ENCODE measurements at regions of chr14 and their contacts with region 1.

Region 1: DNA sequence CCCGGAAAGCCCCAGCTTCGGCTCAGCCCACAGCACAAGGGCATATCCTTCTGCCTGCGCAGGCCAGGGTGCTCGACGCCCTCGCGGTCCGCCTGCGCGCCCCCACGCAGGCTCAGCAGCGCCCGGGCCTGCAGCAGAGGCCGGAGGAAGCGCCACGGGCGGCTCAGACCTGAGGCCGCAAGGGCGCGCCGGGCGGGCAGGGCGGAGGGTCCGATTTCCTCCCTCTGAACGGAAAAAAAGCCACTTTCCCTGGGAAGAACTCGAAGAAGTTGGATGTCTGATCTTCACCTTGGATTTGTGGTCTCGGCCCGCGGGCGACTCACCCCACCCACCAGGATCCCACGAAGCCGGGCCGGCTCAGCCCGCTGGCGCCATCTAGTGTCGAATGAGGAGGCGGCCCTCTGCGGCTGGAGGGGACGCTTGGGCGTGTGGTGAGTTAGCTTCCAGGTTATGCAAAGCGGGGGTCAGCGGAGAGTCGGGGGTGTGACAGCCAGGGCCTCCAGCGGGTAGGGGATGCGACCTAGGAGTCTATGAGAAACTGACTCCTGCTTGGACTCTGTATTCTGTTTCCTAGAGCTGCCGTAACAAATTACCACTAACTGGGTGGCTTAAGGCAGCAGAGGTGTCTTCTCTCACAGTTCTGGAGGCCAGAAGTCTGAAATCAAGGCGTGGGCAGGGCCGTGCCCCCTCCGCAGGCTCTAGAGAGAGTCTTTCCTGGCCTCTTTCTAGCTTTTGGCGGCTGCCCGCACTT is 40.0 kb upstream of the SRSF5 start:
- DNase-seq: peak; percentile 63 to 95 (median 80)
- ATAC-seq: peak; percentile 96 to 97 (median 97)
- H3K4me3 ChIP-seq: peak overlapping the region in 2 of 4 donors; percentile 33 to 43
- H3K27ac ChIP-seq: peak overlapping the region in 1 of 4 donors; percentile 64
- H3K4me1 ChIP-seq: peaks cover 0 to 3% (median 0%) of the 10 kb centered on the region in 3 donors
- H3K27me3 ChIP-seq: no peaks in the 10 kb centered on the region
- CTCF ChIP-seq: peak; percentile 92 to 98 (median 98)

Region 2: DNA sequence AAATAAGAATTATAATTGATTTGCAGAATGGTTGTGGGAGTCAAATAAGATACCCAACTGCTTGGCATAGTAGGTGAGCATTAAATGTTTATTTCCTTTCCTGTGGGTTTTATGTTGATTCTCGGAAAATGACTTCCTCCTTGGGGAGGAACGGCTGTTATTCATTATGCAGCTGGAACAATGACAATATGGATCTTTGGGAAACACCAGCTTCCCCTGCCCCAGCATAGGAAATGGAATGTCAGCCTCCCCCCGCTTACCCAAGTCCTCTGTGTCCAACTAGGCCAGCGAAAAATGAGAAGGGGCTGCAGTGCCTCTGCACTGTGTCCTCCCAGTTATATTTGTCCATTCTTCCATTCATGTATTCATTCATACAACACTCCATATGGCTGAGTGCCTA is 140.5 kb before region 1 on chr14:
- intact Hi-C with region 1: loop called in 1 of 3 experiments (anchors 2 kb)
- DNase-seq: no peak
- ATAC-seq: no peak
- H3K4me3 ChIP-seq: no peak overlapping the region
- H3K27ac ChIP-seq: no peak overlapping the region
- H3K4me1 ChIP-seq: no peaks in the 10 kb centered on the region
- H3K27me3 ChIP-seq: no peaks in the 10 kb centered on the region
- CTCF ChIP-seq: no peak

Region 3: DNA sequence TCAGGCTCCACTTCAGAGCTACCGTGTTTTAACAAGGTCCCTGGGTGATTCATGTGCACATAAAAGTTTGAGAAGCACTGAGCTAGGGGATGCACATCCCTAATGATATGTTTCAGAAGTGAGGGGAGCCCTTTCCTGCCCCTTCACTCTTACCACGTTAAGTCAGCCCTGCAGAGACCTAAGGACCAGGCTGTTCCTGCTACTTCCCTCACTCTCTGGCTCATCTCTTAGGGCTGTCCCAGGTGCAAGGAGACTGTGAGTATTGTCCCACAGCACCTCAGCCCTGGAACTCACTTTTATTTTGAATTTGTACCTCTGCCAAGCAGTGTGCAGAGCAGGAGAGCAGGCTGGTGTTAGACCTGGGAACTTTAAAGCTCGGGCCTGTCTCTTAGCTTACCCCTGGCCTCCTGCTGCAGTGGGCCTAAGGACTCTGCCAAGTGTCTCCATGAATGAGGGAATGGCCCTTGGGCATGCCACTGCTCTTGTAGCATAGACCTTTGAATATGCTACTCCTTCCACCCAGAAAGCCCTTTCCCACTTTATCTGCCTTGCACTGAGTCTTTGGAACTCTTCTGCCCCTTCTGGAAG is 126.5 kb before region 1 on chr14:
- intact Hi-C with region 1: loop called in 2 of 3 experiments (anchors 5 to 10 kb)
- DNase-seq: no peak
- ATAC-seq: no peak
- H3K4me3 ChIP-seq: no peak overlapping the region
- H3K27ac ChIP-seq: no peak overlapping the region
- H3K4me1 ChIP-seq: no peaks in the 10 kb centered on the region
- H3K27me3 ChIP-seq: no peaks in the 10 kb centered on the region
- CTCF ChIP-seq: no peak

Region 4: DNA sequence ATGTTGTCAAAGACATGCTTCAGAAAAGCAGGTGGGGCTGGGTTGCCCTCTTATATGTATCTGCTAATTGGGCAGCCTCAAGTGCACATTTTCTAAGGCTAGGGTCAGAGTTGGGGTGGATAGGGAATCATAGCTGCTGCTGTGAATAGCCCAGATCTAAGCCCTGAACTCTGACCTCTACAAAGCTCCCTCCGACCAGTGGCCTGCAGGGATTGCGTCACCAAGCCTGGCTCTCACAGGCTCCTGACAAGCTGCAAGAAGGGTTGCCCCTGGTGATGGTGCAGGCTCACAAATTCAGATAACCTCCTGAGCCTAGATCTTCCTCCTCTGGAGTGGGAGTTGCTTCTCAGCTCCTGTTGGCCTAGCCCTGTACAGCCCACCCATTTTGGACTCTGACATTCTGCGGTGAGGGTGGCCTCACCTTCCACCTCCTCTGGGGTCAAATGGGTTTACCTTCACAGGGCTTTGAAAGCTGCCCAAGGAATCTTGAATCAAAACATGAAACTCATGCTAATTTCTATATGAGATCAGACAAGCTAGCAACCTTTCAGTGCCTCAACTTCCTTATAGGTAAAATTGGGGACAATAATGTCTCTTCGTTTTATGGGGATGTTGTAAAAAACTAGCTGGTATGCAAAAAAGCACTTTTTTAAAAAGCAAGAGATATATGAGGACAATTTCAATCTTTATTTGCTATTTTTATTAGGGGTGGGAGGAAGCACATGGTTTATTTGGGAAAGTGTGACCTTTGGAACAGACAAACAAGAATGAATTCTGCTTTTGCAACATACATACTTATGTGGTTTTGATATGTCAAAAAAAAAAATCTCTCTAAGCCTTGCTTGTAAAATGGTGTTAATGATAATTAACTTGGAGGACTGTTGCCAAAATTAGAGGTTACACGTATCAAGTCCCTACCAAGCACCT is 120.4 kb before region 1 on chr14:
- intact Hi-C with region 1: loop called in 2 of 3 experiments (anchors 5 to 10 kb)
- DNase-seq: no peak
- ATAC-seq: peak in 1 of 4 donors; percentile 3
- H3K4me3 ChIP-seq: no peak overlapping the region
- H3K27ac ChIP-seq: peak overlapping the region in 1 of 4 donors; percentile 5
- H3K4me1 ChIP-seq: peaks cover 0 to 15% (median 0%) of the 10 kb centered on the region in 3 donors
- H3K27me3 ChIP-seq: no peaks in the 10 kb centered on the region
- CTCF ChIP-seq: no peak

Region 5: GRCh38 chr14:69850086-69850735 is 123.3 kb after region 1 on chr14:
- intact Hi-C with region 1: no loop called
- DNase-seq: no peak
- ATAC-seq: no peak
- H3K4me3 ChIP-seq: no peak overlapping the region
- H3K27ac ChIP-seq: no peak overlapping the region
- H3K4me1 ChIP-seq: no peaks in the 10 kb centered on the region
- H3K27me3 ChIP-seq: no peaks in the 10 kb centered on the region
- CTCF ChIP-seq: no peak

Measured in pancreas (tissue), 10 donors.